Posterior vena cava (tissue), 2 donors: ENCODE measurements at regions of chr9 and their contacts with region 1.

Region 1: GRCh38 chr9:133609311-133610098 is at the start of gene FAM163B:
- DNase-seq: no peak
- total RNA-seq, gene FAM163B: not detected

Region 2: GRCh38 chr9:132207839-132208615 is 1401.5 kb before region 1 on chr9:
- intact Hi-C with region 1: loop called in 1 of 2 experiments (anchors 5 kb)
- DNase-seq: no peak

Region 3: GRCh38 chr9:132789719-132790118 is 819.8 kb before region 1 on chr9:
- intact Hi-C with region 1: no loop called
- DNase-seq: no peak

Region 4: DNA sequence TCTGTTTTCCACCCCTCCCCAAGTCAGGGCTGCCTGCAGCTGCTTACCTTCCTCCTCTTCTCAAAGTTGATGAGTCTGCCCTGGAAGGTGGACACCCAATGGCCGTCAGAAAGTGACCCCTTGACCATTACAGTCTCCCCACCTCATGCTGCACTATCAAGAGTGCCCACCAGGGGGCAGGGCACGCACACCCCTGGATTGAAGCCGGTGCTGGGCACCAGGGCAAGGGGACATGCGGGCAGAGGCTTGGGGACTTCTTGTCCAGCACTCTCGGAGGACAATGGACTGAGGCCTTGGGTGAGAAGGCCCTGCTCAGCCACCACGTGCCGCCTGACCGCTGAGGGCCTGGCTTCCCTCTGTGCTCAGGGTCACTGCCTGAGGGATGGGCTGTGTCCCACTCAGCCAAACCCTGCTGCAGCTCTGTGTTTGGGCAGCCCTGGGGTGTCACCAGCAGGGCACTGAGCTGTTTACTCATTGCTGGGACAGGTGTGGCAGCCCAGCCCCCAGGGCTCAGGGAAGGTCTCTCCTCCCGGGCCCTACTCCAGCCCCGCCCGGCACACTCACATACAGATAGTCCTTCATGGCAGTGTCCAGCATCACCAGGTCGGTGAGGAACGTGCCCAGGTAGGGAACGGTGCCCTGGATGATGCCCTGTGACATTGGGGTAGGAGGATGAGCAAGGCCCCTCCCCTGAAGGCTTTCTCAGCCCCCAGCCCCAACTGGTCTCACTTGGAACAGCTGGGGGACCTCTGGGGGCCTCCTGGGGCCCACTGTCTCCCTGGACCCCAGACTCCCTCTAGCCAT is 506.1 kb before region 1 on chr9:
- intact Hi-C with region 1: no loop called
- DNase-seq: peak; percentile 90

Region 5: DNA sequence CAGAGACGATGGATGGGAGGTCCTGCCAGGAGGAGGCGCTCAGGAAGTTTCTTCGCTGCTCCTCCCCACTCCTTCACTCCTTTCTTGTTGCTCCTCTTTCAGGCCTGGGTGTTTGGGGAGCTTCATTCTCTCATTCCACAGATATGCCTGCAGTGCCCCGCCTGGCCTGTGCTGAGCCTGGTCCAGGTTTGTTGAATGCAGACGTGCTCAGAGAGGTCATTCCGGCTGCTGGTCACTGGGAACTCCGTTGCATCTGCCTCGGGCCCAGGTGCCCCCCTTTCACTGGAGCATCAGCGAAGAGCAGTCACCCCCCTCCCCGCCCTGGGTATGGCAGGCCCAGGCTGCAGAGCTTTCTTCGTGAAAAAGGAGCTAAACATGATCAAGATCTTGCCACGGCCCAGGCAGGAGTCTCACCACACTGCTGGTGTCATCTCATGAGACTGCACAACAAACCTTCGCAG is 289.1 kb before region 1 on chr9:
- intact Hi-C with region 1: no loop called
- DNase-seq: no peak

Region 6: GRCh38 chr9:133572821-133573361 is 36.6 kb before region 1 on chr9:
- intact Hi-C with region 1: no loop called
- DNase-seq: no peak

Region 7: DNA sequence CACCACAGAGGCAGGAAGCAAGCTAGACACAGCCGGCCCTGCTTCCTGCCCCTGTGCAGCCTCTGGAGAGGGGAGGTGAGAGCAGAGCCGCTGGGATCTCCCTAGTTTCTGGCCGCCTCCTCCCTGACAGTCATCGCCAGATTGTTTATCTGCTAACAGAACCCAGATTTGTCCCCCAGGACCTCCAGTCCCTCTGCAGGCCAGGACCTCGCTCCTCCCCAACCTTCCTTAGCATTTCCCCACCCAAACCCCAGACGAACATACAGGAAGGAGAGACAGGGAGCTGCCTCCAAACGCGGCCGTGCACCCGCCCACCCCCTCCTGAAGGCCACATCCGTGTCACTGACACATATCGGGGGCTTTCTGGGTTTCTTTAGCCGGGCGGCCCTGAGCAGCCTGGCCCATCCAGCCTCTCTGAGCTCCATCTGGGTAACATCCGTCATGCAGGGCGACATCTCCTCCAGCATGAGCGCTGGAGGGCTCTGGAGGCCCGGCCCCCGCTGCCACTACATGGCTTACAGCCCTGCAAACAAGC is 74.1 kb after region 1 on chr9:
- intact Hi-C with region 1: loop called in 1 of 2 experiments (anchors 10 kb)
- DNase-seq: peak; percentile 82

Region 8: GRCh38 chr9:133726401-133727276 is 117.1 kb after region 1 on chr9:
- intact Hi-C with region 1: loop called in 1 of 2 experiments (anchors 10 kb)
- DNase-seq: peak; percentile 85